ENCODE measurements at regions of chr16 and their contacts with region 1.

Region 1: DNA sequence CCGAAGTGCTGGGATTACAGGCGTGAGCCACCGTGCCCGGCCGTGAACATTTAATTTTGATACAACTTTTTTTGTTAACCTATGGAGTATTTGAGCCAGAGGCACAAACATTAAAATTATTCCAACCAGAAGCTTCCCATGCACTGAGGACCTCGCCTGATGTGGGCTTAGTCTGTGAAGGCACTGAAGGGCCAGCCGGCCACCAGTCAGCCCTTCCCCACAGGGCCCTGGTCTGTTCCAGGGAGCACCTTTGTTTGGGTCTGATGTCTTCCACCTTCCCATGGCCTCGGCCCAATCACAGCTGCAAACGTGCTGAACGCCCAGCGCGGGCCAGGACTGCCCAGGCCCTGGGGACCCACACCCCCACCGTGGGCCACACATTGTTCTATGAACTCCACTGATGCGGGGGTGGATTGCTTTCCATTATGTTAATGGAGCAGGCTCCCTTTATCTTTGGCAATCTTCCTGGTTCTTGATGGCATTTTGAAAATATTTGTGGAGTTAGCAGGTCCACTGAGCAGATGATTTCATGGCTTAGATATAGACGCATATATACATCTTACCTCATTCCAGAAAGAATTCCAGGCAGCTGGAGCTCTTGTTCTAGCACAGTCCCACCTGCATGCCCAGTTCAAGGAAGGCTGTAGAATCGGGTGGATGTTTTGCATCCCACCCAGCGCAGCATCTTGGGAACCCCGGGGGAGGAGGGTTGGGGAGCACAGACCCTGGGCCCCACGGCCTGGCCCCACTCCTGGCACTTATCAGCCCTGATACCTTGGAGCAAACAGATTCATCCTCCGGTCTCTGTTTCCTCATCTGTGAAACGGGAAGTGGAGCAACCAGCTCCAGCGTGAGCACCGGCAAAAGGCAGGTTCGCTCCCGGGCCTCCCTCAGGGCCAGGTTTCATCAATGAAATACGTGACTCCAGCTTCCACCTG is 14.5 kb downstream of the SPIRE2 start:
- DNase-seq: peak; percentile 87
- ATAC-seq: peak; percentile 60
- H3K4me3 ChIP-seq: peak overlapping the region; percentile 14 to 42 (median 16); a peak in 5 of 6 replicates
- H3K27ac ChIP-seq: peak overlapping the region; percentile 47
- H3K4me1 ChIP-seq: peaks cover 43% of the 10 kb centered on the region
- H3K27me3 ChIP-seq: no peaks in the 10 kb centered on the region
- CTCF ChIP-seq: no peak; the same call in 1 of the 2 replicates
- EP300 ChIP-seq: no peak
- POLR2A ChIP-seq: no peak; a peak in 1 of 4 replicates
- RAD21 ChIP-seq: no peak

Region 2: DNA sequence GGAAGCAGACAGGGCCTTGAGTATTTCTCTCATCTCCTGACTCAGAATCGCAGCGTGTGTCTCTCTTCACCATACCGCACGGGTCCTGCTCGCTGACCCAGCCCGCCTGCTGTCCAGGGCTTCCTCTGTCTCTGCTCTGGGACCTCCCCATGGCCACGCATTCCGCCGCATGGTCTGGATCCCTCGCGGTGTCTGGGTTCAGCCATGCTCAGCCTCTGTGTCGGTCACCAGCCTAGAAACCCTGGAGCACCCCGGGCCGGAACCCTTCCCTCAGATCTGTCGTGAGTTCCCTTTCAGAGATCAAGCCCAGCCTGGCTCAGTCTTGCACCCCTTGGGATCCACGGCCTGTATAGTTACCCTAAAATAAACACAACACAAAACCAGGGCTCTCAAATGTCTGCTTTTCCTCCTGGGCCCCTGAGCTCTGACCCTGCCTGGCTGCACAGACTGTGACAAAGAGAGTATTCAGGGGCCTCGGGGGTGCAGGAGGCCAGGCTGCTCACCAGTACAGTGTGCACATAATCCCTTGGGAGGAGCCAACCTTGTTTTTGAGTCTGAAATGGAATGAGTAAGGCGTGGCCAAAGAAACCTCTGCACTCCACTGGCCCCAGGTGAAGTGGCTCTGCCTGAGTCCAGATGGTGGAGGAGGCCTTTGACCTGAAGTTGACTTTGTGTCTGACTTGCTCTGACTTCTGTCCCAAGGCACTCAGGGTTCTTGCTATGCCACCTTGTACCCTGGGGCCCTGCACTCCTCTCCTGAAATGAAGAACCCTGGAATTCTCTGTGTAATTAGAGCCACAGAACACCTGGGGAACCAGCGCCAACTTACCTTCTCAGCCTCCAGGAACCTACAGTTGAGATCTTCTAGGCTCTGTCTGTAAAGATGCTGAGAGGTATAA is 20.3 kb before region 1 on chr16:
- CTCF ChIA-PET with region 1: no interaction called
- POLR2A ChIA-PET with region 1: interaction called, 111 read pairs
- in situ Hi-C with region 1: no loop called
- intact Hi-C with region 1: loop called (anchors 2 kb)
- DNase-seq: peak; percentile 99
- ATAC-seq: peak; percentile 95
- H3K4me3 ChIP-seq: peak overlapping the region; percentile 43 to 73 (median 67); a peak in 5 of 6 replicates
- H3K27ac ChIP-seq: peak overlapping the region; percentile 98
- H3K4me1 ChIP-seq: peaks cover 92% of the 10 kb centered on the region
- H3K27me3 ChIP-seq: no peaks in the 10 kb centered on the region
- CTCF ChIP-seq: peak; percentile 2; the same call in 1 of the 2 replicates
- EP300 ChIP-seq: peak; percentile 79 to 90
- POLR2A ChIP-seq: peak; percentile 82 to 88
- RAD21 ChIP-seq: no peak; the same call in 1 of the 2 replicates

Measured in HepG2 (cell line).